ENCODE measurements at regions of chr4 and their contacts with region 1.

Region 1: GRCh38 chr4:162497564-162498167 is 333.9 kb upstream of the FSTL5 start:
- DNase-seq: peak in 8 of 42 donors; percentile 5 to 54 (median 14)

Region 2: GRCh38 chr4:161990721-161991120 is 506.9 kb before region 1 on chr4:
- intact Hi-C with region 1: no loop called
- DNase-seq: no peak

Region 3: GRCh38 chr4:162650799-162651198 is 153.1 kb after region 1 on chr4:
- intact Hi-C with region 1: no loop called
- DNase-seq: no peak

Region 4: GRCh38 chr4:162803378-162803777 is 305.7 kb after region 1 on chr4:
- intact Hi-C with region 1: no loop called
- DNase-seq: no peak

Region 5: DNA sequence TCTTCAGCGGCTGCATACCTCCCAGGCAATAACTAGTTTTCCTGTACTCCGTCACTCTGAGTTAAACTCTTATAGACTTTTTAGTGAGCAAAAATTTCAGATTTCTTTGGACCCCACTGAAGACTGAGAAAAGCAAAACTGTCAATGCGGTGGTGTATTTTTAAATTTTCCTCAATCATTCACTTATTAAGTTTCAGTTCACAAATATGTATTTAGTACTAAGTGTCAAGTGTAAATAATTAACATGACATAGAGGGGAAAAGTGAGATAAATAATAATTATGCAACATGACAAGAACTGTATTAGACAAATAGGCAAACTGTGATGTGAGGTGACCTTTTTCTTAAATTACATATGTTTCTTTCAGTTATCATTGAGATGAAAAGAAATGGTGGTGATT is 544.6 kb after region 1 on chr4:
- intact Hi-C with region 1: loop called (anchors 10 kb)
- DNase-seq: no peak

Region 6: GRCh38 chr4:163395758-163396157 is 898.1 kb after region 1 on chr4:
- intact Hi-C with region 1: no loop called
- DNase-seq: no peak

Region 7: DNA sequence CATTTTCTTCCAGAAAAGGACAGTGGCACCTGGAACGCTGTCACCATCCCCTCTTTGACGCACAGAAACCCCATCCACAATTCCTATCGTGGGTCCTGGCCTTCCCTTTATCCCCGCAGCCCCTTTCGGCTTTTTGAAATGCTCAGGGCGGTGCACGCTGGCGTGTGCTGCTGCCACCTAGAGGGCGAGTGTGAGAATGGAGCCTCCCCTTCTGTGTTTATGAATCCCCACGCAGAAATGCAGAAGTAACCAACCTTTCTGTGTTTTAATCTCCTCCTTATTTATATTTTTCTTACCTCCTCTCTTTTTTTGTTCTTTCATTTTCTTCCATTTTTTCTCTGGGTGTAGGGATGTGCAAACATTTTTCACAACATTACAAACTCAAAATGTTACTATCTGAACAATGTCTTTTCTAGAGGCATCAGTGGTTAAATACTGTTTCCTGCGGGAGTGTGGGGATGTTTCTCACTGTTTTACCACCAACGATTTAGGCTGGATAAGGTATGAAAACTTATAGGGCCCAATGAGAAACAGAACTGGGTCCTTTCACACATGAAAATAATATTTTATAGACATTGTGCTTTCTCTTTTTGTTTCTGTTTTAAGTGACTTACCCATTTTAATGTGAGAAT is 1046.9 kb after region 1 on chr4:
- intact Hi-C with region 1: loop called (anchors 10 kb)
- DNase-seq: peak; percentile 36 to 86 (median 69)